SK-N-SH (cell line): ENCODE measurements at regions of chr22 and their contacts with region 1.

Region 1: GRCh38 chr22:28019881-28020871 is 101.1 kb upstream of the PITPNB start:
- DNase-seq: peak; percentile 89
- H3K4me3 ChIP-seq: peak overlapping the region in 1 of 2 experiments; percentile 18; a peak in 1 of 4 replicates
- H3K27ac ChIP-seq: peak overlapping the region; percentile 4 to 91; a peak in 3 of 4 replicates
- H3K4me1 ChIP-seq: peaks cover 8 to 99% of the 10 kb centered on the region in 2 experiments; a peak in 3 of 4 replicates
- H3K27me3 ChIP-seq: no peaks in the 10 kb centered on the region
- CTCF ChIP-seq: peak; percentile 96
- EP300 ChIP-seq: no peak
- RAD21 ChIP-seq: peak; percentile 93

Region 2: GRCh38 chr22:27842669-27843431 is 177.3 kb before region 1 on chr22:
- CTCF ChIA-PET with region 1: no interaction called
- POLR2A ChIA-PET with region 1: no interaction called
- DNase-seq: peak; percentile 71
- H3K4me3 ChIP-seq: no peak overlapping the region
- H3K27ac ChIP-seq: peak overlapping the region in 1 of 2 experiments; percentile 98; a peak in 2 of 4 replicates
- H3K4me1 ChIP-seq: peaks cover 8 to 56% of the 10 kb centered on the region in 2 experiments; a peak in 3 of 4 replicates
- H3K27me3 ChIP-seq: no peaks in the 10 kb centered on the region
- CTCF ChIP-seq: no peak
- EP300 ChIP-seq: peak in 1 of 2 experiments; percentile 63; a peak in 2 of 4 replicates
- RAD21 ChIP-seq: no peak

Region 3: GRCh38 chr22:28034760-28035401 is 14.7 kb after region 1 on chr22:
- CTCF ChIA-PET with region 1: interaction called, 39 read pairs
- POLR2A ChIA-PET with region 1: interaction called, 6 read pairs
- DNase-seq: peak; percentile 64
- H3K4me3 ChIP-seq: peak overlapping the region; percentile 6 to 17; a peak in 2 of 4 replicates
- H3K27ac ChIP-seq: peak overlapping the region; percentile 42 to 97; a peak in 3 of 4 replicates
- H3K4me1 ChIP-seq: peaks cover 20 to 52% of the 10 kb centered on the region in 2 experiments
- H3K27me3 ChIP-seq: no peaks in the 10 kb centered on the region
- CTCF ChIP-seq: no peak
- EP300 ChIP-seq: peak in 1 of 2 experiments; percentile 86; a peak in 3 of 4 replicates
- RAD21 ChIP-seq: no peak

Region 4: DNA sequence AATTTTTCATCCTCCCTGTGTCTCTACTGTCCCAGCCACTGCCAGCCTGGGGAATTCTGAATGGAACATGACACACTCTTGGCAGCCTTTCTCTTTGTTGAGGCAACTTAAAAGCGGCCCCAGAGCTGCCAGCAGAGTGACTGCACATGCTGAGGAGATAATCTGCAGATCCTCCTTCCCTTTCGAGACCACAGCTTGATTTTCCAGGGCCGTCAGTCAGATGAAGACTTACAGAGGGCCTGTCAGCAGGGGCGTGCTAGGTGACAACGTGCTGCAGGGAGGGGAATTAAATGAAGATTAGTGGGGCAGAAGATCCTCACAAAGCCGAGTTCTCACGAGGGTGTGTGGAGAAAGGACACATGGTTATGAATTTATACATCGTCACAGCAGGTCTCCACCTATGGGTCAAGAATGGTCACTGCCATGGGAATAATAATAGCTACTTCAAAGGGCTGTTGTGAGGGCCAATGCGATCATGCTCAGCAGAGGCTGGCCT is 92.4 kb after region 1 on chr22:
- CTCF ChIA-PET with region 1: interaction called, 27 read pairs
- POLR2A ChIA-PET with region 1: no interaction called
- DNase-seq: peak; percentile 47
- H3K4me3 ChIP-seq: 0 out of 4 replicates have a peak overlapping the region, but pooled peaks of 1 of the 2 experiments have one; percentile 7
- H3K27ac ChIP-seq: peak overlapping the region; percentile 63 to 70
- H3K4me1 ChIP-seq: peaks cover 20 to 29% of the 10 kb centered on the region in 2 experiments
- H3K27me3 ChIP-seq: no peaks in the 10 kb centered on the region
- CTCF ChIP-seq: peak; percentile 62
- EP300 ChIP-seq: peak in 1 of 2 experiments; percentile 49; a peak in 1 of 4 replicates
- RAD21 ChIP-seq: peak; percentile 54

Region 5: GRCh38 chr22:28183078-28183860 is 163.1 kb after region 1 on chr22:
- CTCF ChIA-PET with region 1: interaction called, 11 read pairs
- POLR2A ChIA-PET with region 1: no interaction called
- DNase-seq: no peak
- H3K4me3 ChIP-seq: no peak overlapping the region
- H3K27ac ChIP-seq: no peak overlapping the region
- H3K4me1 ChIP-seq: peaks cover 15% of the 10 kb centered on the region in 2 experiments; a peak in 3 of 4 replicates
- H3K27me3 ChIP-seq: no peaks in the 10 kb centered on the region
- CTCF ChIP-seq: no peak
- EP300 ChIP-seq: no peak
- RAD21 ChIP-seq: no peak

Region 6: GRCh38 chr22:28594797-28595462 is 574.8 kb after region 1 on chr22:
- CTCF ChIA-PET with region 1: interaction called, 41 read pairs
- POLR2A ChIA-PET with region 1: no interaction called
- DNase-seq: peak; percentile 60
- H3K4me3 ChIP-seq: no peak overlapping the region
- H3K27ac ChIP-seq: peak overlapping the region; percentile 34 to 72
- H3K4me1 ChIP-seq: peaks cover 9% of the 10 kb centered on the region in 2 experiments; a peak in 3 of 4 replicates
- H3K27me3 ChIP-seq: no peaks in the 10 kb centered on the region
- CTCF ChIP-seq: peak; percentile 85
- EP300 ChIP-seq: peak in 1 of 2 experiments; percentile 59; a peak in 2 of 4 replicates
- RAD21 ChIP-seq: peak; percentile 99

Region 7: GRCh38 chr22:28829358-28830181 is 809.4 kb after region 1 on chr22:
- CTCF ChIA-PET with region 1: interaction called, 18 read pairs
- POLR2A ChIA-PET with region 1: no interaction called
- DNase-seq: peak; percentile 77
- H3K4me3 ChIP-seq: peak overlapping the region in 1 of 2 experiments; percentile 31; a peak in 1 of 4 replicates
- H3K27ac ChIP-seq: no peak overlapping the region
- H3K4me1 ChIP-seq: no peaks in the 10 kb centered on the region
- H3K27me3 ChIP-seq: no peaks in the 10 kb centered on the region
- CTCF ChIP-seq: peak; percentile 98
- EP300 ChIP-seq: no peak
- RAD21 ChIP-seq: peak; percentile 98